Activated T-helper 1 cell treated with anti-CD3 and anti-CD28 coated beads, Interleukin-12 subunit alpha, Interleukin-12 subunit beta, Interleukin-2, Interleukin-4 antibody, amounts not matched to agents 30 ng/mL and 10 ng/mL and 1 ng/mL, durations not matched to agents 14 hours and 24 hours and 36 hours (primary cell): ENCODE measurements at regions of chr14 and their contacts with region 1.

Region 1: GRCh38 chr14:70359181-70360090 is at the start of gene COX16:
- DNase-seq: peak; percentile 76
- H3K4me3 Mint-ChIP-seq: peak within 1 kb of the TSS; percentile 99
- H3K27ac Mint-ChIP-seq: peak within 1 kb of the TSS; percentile 71
- H3K4me1 Mint-ChIP-seq: peaks cover 21% of the 10 kb centered on the region
- H3K27me3 Mint-ChIP-seq: no peaks in the 10 kb centered on the region
- total RNA-seq, gene COX16: 67.3 and 67.7 TPM in 2 replicates

Region 2: GRCh38 chr14:69153131-69153872 is 1206.1 kb before region 1 on chr14:
- intact Hi-C with region 1: loop called (anchors 5 kb)
- DNase-seq: peak; percentile 90
- H3K4me3 Mint-ChIP-seq: peak overlapping the region; percentile 90
- H3K27ac Mint-ChIP-seq: peak overlapping the region; percentile 92
- H3K4me1 Mint-ChIP-seq: peaks cover 33% of the 10 kb centered on the region
- H3K27me3 Mint-ChIP-seq: peaks cover 39% of the 10 kb centered on the region

Region 3: GRCh38 chr14:70254476-70254961 is 104.9 kb before region 1 on chr14:
- intact Hi-C with region 1: no loop called
- DNase-seq: no peak
- H3K4me3 Mint-ChIP-seq: no peak overlapping the region
- H3K27ac Mint-ChIP-seq: no peak overlapping the region
- H3K4me1 Mint-ChIP-seq: no peaks in the 10 kb centered on the region
- H3K27me3 Mint-ChIP-seq: peaks cover 66% of the 10 kb centered on the region

Region 4: GRCh38 chr14:70289138-70289537 is 70.3 kb before region 1 on chr14:
- intact Hi-C with region 1: loop called (anchors 1 kb)
- DNase-seq: no peak
- H3K4me3 Mint-ChIP-seq: no peak overlapping the region
- H3K27ac Mint-ChIP-seq: no peak overlapping the region
- H3K4me1 Mint-ChIP-seq: no peaks in the 10 kb centered on the region
- H3K27me3 Mint-ChIP-seq: peaks cover 11% of the 10 kb centered on the region

Region 5: GRCh38 chr14:70567791-70568190 is 208.4 kb after region 1 on chr14:
- intact Hi-C with region 1: loop called (anchors 10 kb)
- DNase-seq: no peak
- H3K4me3 Mint-ChIP-seq: no peak overlapping the region
- H3K27ac Mint-ChIP-seq: no peak overlapping the region
- H3K4me1 Mint-ChIP-seq: no peaks in the 10 kb centered on the region
- H3K27me3 Mint-ChIP-seq: no peaks in the 10 kb centered on the region

Region 6: DNA sequence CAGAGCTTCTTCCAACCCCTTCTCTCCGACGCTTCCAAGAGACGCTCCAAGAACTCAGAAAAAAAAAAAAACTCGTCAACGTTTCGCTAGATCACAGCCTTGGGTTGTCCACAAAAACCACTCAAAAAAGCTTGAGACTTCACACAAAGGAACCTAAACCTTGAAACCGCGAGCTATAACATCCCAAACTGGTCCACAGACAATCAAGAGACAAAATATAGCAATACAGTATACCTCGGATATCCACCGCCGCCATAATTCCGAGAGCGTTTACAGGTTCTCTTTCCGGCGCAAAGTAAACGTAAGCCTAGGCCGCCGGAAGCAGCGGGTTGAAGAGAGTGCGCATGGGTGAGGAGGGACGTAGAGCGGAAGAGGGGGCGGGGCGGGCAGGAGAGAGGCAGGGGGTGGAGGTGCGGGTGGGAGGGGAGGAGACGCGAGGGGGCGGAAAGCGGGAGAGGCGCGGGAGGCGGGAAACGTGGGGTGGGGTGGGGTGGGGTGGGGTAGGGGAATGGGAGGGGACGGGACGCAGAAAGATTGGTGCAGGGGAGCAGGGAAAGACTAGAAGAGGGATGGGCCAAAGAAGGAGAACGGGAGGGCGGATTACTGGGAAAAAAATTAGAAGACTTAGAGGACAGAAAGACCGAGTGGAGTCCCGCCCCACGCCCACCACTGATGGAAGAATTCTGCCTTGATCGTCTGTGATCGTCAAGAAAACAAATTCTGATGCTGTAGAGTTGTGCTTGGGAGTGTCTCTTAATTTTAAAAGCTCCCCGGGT is 241.1 kb after region 1 on chr14 and contains the start of gene MED6:
- intact Hi-C with region 1: loop called (anchors 1 kb)
- DNase-seq: peak; percentile 89
- H3K4me3 Mint-ChIP-seq: peak within 1 kb of the TSS; percentile 100
- H3K27ac Mint-ChIP-seq: peak within 1 kb of the TSS; percentile 92
- H3K4me1 Mint-ChIP-seq: peaks cover 18% of the 10 kb centered on the region
- H3K27me3 Mint-ChIP-seq: peaks cover 4% of the 10 kb centered on the region
- total RNA-seq, gene MED6: 59.3 and 63.7 TPM in 2 replicates